ENCODE measurements at regions of chr2 and their contacts with region 1.

Region 1: DNA sequence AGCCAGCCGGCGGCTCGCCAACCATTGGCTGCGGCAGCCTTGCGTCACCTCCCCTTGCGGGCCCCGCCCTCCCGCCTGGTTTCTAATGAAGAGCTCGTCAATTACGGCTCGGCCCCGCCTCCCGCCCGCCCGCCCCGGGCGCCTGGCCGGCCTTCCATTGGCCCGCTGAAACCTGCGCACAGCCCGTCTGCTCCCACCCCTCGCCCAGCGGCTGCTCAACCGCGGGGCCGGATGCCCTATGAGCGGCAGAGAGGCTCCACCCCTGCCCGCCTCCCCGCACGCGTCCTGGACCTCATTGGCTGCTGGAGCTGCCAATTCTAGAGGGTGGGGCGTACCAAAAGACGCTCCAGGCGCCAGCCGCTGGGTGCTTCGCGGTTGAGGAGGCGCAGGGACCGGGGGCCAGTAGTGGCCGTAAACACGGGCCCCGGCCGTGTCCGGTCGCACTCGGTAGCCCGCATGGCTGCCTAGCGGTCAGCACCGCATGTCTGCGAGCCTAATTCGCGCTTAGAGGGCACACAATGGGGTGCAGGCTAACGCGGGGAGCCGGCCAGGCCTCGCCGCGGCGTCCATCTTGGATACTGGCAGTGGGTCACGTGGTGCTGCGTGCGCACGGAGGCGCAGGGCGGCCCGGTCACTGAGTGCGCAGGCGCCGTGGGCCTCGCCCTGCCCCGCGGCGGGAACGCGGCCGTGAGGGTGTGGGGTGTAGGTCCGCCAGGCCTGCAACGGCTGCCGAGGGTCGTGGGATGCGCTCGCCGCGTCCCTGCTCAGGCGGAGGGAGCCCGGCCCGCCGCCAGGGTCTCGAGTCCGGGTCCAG is 454 bp upstream of the HDAC4 start:
- DNase-seq: peak; percentile 99
- H3K4me3 Mint-ChIP-seq: peak overlapping the region; percentile 87
- H3K27ac Mint-ChIP-seq: peak overlapping the region; percentile 95
- H3K4me1 Mint-ChIP-seq: peaks cover 41% of the 10 kb centered on the region
- H3K27me3 Mint-ChIP-seq: no peaks in the 10 kb centered on the region

Region 2: DNA sequence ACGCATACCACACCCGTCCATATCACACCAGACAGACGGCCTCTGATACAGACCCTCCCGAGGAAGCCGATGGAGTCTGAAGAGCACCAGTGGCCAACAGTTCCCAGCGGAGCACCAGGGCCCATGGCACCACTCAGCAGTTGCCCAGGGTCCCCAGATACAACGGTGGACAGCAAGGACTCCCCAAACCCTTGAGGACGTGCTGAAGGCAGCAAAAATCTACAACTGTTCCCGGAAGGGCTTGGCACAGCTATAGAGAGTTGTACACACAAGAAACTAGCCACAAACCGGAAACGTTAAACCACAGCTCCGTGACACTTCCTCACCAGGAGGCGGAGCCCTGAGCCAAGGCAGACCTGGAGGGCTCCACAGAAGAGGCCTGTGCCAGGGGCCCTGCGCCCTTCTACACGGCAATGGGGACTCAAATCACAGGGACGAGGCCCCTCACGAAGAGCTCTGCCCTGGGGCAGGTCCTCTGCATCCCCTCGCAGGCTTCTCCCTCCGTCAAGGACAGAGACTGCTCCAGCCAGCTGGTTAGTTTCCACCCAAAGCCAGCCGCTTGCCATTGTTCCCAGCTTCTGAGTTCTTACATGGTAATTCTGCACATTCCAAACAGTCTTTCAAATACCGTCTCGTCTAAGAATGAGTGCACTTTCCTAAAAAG is 133.9 kb before region 1 on chr2:
- CTCF ChIA-PET with region 1: interaction called, 4 read pairs
- intact Hi-C with region 1: loop called (anchors 1 kb)
- DNase-seq: peak; percentile 98
- H3K4me3 Mint-ChIP-seq: peak overlapping the region; percentile 71
- H3K27ac Mint-ChIP-seq: peak overlapping the region; percentile 91
- H3K4me1 Mint-ChIP-seq: peaks cover 72% of the 10 kb centered on the region
- H3K27me3 Mint-ChIP-seq: peaks cover 14% of the 10 kb centered on the region

Region 3: DNA sequence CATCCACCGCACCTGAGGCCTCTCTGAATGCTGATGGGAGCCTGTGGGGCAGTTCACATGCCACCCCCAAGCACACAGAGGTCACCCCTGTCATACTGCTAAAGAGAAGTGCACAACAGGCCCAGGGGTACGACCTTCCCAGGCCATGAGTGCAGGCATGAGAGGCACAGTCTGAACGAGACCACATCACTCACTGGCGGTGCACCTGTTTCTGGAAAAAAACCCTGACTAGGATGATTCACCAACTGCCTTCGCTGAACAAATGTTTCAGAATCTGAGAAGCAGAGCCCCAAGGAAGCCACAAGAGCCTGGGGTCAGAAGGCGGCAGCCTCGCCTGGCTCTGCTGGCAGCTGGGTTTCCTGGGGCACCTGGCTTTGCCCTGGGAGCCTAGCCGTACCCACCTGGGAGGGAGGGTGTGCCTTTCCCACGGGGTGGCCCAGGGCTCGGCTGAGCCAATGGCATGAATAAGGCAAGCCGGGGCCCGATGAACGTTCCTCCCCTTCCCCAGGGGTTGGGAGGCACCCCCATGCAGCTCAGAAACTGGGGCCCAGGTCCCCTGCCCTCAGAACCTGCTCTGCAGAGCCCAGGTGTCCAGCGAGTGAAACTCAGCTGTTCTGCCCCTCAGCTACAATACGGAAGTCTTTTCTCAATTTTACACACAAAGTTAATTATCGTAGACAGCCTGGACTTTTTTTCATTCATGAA is 74.3 kb before region 1 on chr2:
- CTCF ChIA-PET with region 1: no interaction called
- intact Hi-C with region 1: loop called (anchors 2 kb)
- DNase-seq: peak; percentile 94
- H3K4me3 Mint-ChIP-seq: peak overlapping the region; percentile 24
- H3K27ac Mint-ChIP-seq: peak overlapping the region; percentile 81
- H3K4me1 Mint-ChIP-seq: peaks cover 79% of the 10 kb centered on the region
- H3K27me3 Mint-ChIP-seq: no peaks in the 10 kb centered on the region

Region 4: GRCh38 chr2:239433777-239434403 is 32.6 kb after region 1 on chr2:
- CTCF ChIA-PET with region 1: no interaction called
- intact Hi-C with region 1: no loop called
- DNase-seq: peak; percentile 43
- H3K4me3 Mint-ChIP-seq: no peak overlapping the region
- H3K27ac Mint-ChIP-seq: no peak overlapping the region
- H3K4me1 Mint-ChIP-seq: peaks cover 11% of the 10 kb centered on the region
- H3K27me3 Mint-ChIP-seq: peaks cover 5% of the 10 kb centered on the region

Region 5: DNA sequence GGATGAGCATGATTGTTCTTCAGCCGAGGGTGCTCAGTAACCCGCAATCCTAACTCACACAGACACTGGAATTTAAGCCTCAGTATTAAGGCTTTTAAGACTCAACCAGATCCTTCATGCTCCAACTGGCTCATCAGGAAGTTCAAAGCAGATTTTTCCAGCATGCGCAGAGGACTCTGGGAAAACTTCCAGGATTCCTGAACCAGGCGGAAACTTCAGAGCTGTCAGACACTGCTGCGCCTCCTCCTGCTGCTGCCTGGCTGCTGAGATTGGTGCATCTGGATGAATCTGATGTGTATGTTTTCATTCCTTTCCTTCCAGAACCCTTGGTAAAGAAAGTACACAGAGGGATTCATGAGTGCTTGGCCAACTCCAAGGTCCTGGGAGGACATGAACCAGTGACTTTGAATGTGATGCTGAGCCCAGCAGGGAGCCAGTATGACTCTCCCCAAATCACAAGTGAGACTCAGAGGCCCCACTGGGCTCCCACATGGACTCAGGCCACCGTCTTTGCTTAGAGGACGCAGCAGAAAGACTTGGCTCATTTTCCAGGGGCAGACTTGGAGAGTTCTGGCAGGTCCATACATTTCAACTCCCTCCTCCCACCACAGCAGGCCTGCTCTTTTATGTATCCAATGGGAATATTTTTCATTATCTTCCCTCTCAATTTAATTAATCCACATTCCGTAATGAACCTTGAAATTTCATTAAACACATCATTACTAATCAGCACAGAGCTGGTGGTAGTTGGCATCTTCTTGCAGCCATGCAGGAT is 143.1 kb after region 1 on chr2:
- CTCF ChIA-PET with region 1: no interaction called
- intact Hi-C with region 1: loop called (anchors 1 kb)
- DNase-seq: no peak
- H3K4me3 Mint-ChIP-seq: no peak overlapping the region
- H3K27ac Mint-ChIP-seq: no peak overlapping the region
- H3K4me1 Mint-ChIP-seq: peaks cover 35% of the 10 kb centered on the region
- H3K27me3 Mint-ChIP-seq: peaks cover 11% of the 10 kb centered on the region

Region 6: DNA sequence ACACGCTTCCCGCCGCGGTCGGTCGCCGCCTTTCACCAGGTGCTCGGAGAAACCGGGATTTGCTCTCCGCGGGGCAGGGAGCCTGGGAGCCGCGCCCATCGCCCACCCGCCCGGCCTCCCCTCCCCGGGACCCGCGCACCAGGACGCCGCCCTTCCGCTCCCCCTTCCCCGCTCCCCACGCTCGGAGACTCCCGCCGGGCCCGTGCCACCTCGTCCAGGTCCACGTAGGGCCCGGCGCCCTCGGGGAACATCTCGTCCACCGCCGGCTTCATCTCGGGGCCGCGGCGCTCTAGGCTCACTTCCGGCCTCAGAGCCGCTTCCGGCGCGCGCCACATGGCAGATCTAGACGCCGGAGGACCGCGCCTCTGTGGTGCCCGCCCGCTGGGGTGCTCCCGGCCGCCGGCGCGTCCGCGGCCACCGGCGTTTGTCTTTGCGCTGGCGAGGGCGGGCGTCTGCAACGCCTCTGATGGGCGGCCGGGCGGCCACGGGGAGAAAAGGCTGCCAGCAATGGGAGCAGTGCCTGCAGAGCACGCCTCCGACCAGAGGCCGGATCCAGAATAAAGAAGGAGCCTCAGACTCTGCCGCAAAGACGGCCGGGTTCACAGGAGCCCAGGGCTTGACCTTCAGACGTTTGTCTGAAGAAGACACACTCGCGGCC is 734.9 kb after region 1 on chr2 and contains the start of gene COPS9:
- CTCF ChIA-PET with region 1: no interaction called
- intact Hi-C with region 1: loop called (anchors 5 kb)
- DNase-seq: peak; percentile 87
- H3K4me3 Mint-ChIP-seq: peak within 1 kb of the TSS; percentile 90
- H3K27ac Mint-ChIP-seq: peak within 1 kb of the TSS; percentile 74
- H3K4me1 Mint-ChIP-seq: peaks cover 25% of the 10 kb centered on the region
- H3K27me3 Mint-ChIP-seq: no peaks in the 10 kb centered on the region
- total RNA-seq, gene COPS9: 84.5 to 91.3 TPM